ENCODE measurements at regions of chr2 and their contacts with region 1.

Region 1: DNA sequence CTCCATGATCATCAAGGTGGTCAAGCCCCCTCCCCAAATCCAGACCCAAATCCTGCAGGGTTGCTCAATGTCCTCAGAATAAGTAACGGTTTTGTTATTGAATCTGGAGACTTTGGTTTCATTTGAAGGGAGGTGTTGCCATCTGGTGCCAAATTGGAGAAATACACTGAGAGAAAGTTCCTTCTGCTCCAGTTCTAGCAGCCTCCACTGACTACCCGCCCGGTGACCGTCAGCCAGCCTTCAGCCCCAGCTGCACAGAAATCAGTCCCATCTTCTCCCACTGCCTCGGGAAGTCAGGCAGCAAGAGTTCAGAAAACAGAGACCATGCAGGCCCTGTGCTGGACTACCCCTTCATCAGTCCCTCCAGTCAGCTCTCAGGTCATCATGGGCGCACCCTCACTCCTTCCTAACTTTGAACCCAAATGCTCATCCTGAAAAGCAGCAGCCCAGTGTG is 38.7 kb downstream of the PKDCC start:
- DNase-seq: peak in 7 of 10 donors; percentile 22 to 65 (median 61)
- H3K4me3 ChIP-seq: no peak overlapping the region
- H3K27ac ChIP-seq: peak overlapping the region in 43 of 59 donors; percentile 2 to 83 (median 61)
- H3K27me3 ChIP-seq: no peaks in the 10 kb centered on the region
- CTCF ChIP-seq: peak; percentile 48 to 97 (median 85)

Region 2: GRCh38 chr2:41853427-41854216 is 232.9 kb before region 1 on chr2:
- intact Hi-C with region 1: loop called (anchors 1 to 5 kb)
- DNase-seq: peak in 3 of 10 donors; percentile 22 to 46 (median 33)
- H3K4me3 ChIP-seq: no peak overlapping the region
- H3K27ac ChIP-seq: no peak overlapping the region
- H3K27me3 ChIP-seq: peaks cover 0 to 4% (median 0%) of the 10 kb centered on the region in 45 donors
- CTCF ChIP-seq: peak; percentile 61 to 89 (median 80)

Region 3: GRCh38 chr2:41947701-41948396 is 138.7 kb before region 1 on chr2:
- intact Hi-C with region 1: no loop called
- DNase-seq: no peak
- H3K4me3 ChIP-seq: no peak overlapping the region
- H3K27ac ChIP-seq: no peak overlapping the region
- H3K27me3 ChIP-seq: peaks cover 0 to 12% (median 0%) of the 10 kb centered on the region in 45 donors
- CTCF ChIP-seq: no peak

Region 4: DNA sequence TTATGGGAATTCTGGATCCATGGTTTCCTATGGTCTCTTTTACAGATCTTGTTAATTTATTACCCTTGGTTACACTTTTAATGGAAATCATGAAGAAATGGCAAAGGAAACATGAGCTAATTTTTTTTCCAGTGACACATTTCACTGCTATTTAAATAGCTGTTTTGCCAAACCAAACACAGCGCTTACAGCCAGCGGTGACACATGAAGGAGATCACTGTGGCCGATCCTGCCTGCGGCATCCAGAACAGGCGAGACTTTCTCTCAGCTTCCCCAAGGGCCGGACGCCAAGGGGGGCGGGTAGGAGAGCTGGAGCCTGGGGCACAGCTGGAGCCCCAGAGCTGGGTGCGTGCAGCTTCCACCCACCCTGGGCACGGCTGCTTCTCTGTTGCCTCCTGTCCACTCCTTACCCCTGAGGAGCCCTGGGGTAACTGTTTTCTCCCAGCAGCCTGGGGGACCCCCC is 120.1 kb before region 1 on chr2:
- intact Hi-C with region 1: loop called in 1 of 2 experiments (anchors 5 kb)
- DNase-seq: peak; percentile 15 to 92 (median 84)
- H3K4me3 ChIP-seq: peak overlapping the region in 12 of 59 donors; percentile 1 to 28 (median 15)
- H3K27ac ChIP-seq: peak overlapping the region; percentile 41 to 97 (median 92)
- H3K27me3 ChIP-seq: no peaks in the 10 kb centered on the region
- CTCF ChIP-seq: peak in 3 of 56 donors; percentile 11 to 31 (median 22)

Region 5: GRCh38 chr2:42047488-42048298 is 38.8 kb before region 1 on chr2 and contains the start of gene PKDCC:
- intact Hi-C with region 1: loop called in 1 of 2 experiments (anchors 1 kb)
- DNase-seq: peak in 9 of 10 donors; percentile 36 to 85 (median 72)
- H3K4me3 ChIP-seq: peak within 1 kb of the TSS; percentile 54 to 88 (median 76)
- H3K27ac ChIP-seq: peak within 1 kb of the TSS; percentile 22 to 94 (median 81)
- H3K27me3 ChIP-seq: no peaks in the 10 kb centered on the region
- CTCF ChIP-seq: no peak
- total RNA-seq, gene PKDCC: 26.5 to 91.2 (median 49.3) TPM

Region 6: DNA sequence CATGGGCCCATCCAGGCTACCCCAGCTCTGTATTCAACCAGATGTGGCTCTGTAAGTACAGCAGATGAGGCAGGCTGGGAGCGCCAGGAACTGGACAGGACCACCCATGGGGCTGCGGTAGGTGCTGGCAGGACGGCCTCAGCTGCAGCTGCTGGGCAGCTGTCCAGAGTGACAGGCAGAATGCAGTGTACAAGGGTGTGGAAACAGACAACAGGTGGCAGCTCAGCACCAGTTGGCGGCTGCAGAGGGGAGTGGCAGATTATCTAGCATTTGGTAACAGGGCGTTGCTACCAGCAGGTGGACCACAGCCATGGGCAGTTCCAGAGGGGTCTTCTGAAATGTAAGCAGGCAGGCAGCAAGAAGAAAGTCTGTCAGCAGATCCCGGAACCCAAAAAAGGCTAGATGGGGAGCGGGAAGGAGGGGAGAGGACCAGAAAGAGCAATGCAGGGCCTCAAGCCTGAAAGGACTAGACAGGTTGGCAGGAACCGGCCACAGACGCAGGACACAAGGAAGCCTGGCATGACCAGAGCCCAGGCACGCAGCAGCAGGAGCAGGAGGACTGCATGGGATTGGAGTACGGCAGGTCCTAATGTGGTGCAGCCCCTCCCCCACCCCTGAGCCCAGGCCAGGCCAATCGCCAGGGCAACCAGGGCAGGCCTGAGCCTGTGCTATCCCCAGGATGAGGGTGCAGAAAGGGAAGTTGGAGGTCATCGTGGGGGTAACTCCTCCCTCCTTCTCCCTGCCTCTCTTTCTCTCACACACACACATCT is 14.0 kb before region 1 on chr2:
- intact Hi-C with region 1: no loop called
- DNase-seq: no peak
- H3K4me3 ChIP-seq: no peak overlapping the region
- H3K27ac ChIP-seq: no peak overlapping the region
- H3K27me3 ChIP-seq: no peaks in the 10 kb centered on the region
- CTCF ChIP-seq: no peak

Region 7: DNA sequence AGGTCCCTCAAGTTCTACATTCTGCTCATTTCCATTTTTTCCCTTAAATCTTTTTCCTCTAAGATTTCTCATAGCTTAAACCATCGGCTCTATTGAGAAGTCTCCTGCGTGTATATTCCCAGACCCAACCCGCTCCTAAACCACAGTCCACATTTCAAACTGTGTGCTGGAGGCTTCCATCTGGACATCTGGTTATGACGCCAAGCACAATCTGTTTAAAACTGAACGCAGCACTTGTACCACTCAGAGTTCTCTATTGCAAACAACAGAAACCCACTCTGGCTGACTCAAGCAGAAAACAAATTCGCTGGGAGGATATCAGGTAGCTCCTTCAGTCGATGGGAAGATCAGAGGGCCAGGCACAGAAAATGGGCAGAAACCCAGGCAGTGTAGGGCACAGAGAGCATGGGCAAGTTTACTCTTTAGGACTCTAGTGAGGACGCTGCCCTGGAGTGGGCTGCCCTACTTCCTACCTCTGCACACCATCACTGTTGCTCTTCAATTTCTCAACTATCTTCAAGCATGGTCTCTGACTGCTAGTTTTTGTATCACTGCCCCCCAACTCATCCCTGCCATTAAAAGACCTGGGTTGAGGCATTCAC is 77.0 kb after region 1 on chr2:
- intact Hi-C with region 1: no loop called
- DNase-seq: peak in 1 of 10 donors; percentile 34
- H3K4me3 ChIP-seq: no peak overlapping the region
- H3K27ac ChIP-seq: no peak overlapping the region
- H3K27me3 ChIP-seq: no peaks in the 10 kb centered on the region
- CTCF ChIP-seq: no peak

Region 8: DNA sequence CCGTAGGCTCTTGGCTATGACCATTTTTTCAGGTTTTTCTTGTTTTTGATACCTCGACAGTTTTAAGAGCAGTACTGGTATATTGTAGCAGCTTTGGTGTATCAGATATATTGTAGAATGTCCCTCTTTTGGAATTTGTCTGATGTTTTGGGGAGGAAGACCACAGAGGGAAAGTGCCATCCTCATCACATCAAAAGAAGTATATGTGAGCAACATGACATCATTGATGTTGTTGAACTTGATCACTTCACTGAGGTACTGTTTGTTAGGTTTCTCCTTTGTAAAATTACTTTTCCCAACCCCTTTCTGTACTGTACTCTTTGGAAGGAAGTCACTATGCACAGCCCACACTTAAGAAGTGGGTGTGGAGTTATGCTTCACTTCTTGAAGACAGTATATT is 123.7 kb after region 1 on chr2:
- intact Hi-C with region 1: no loop called
- DNase-seq: no peak
- H3K4me3 ChIP-seq: no peak overlapping the region
- H3K27ac ChIP-seq: no peak overlapping the region
- H3K27me3 ChIP-seq: no peaks in the 10 kb centered on the region
- CTCF ChIP-seq: no peak